Natural killer cell (primary cell): ENCODE measurements at regions of chr9 and their contacts with region 1.

Region 1: DNA sequence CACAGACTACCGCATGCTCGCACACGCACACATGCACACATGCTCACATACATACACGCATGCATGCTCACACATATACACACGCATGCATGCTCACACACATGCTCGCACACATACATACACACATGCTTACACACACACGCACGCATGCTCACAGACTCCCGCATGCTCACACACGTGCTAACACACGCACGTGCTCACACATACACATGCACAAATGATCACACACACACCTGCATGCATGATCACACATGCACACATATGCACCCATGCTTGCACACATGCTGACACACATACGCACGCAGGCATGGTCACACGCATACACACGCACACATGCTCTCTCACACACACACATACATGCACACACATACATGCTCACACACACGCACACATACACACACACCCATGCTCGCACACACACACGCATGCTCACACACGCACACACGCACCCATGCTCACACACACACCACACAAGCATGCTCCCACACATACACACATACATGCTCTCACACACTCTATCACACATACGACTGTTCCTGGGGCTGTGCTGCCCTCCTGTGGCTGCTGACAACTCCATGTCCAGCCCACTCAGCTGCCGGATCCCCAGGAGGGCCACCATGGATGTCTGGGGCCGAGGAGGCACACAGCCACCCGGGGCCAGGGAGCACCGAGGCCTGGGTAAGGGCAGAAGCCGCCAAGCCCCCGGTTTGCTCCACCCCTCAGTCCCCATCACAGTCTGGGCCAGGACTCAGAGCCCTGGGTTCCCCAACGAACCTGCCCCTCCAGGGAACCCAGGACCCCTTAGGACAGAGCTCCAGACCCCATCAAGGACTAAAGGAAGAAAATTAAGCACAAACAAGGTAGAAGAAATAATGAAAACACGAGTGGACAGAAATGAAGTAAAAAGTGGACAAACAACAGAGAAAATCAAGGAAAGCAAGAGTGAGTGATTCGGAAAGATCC is 31.4 kb upstream of the EGFL7 start:
- DNase-seq: peak; percentile 66 to 91
- ATAC-seq: peak; percentile 79 to 91 (median 89)
- H3K4me3 ChIP-seq: no peak overlapping the region
- H3K4me3 Mint-ChIP-seq: no peak overlapping the region
- H3K27ac ChIP-seq: peak overlapping the region; percentile 31
- H3K27ac Mint-ChIP-seq: no peak overlapping the region
- H3K4me1 ChIP-seq: peaks cover 58% of the 10 kb centered on the region
- H3K4me1 Mint-ChIP-seq: peaks cover 0 to 7% of the 10 kb centered on the region in 2 donors
- H3K27me3 ChIP-seq: no peaks in the 10 kb centered on the region
- H3K27me3 Mint-ChIP-seq: peaks cover 0 to 5% of the 10 kb centered on the region in 2 donors
- CTCF ChIP-seq: peak; percentile 57

Region 2: GRCh38 chr9:136245219-136246150 is 385.8 kb before region 1 on chr9 and contains the start of gene QSOX2:
- intact Hi-C with region 1: no loop called
- DNase-seq: peak; percentile 81 to 92
- ATAC-seq: peak; percentile 85 to 93 (median 88)
- H3K4me3 ChIP-seq: peak within 1 kb of the TSS; percentile 38
- H3K4me3 Mint-ChIP-seq: peak within 1 kb of the TSS; percentile 97
- H3K27ac ChIP-seq: peak within 1 kb of the TSS; percentile 59
- H3K27ac Mint-ChIP-seq: peak within 1 kb of the TSS; percentile 85
- H3K4me1 ChIP-seq: peaks cover 50% of the 10 kb centered on the region
- H3K4me1 Mint-ChIP-seq: peaks cover 30 to 38% of the 10 kb centered on the region in 2 donors
- H3K27me3 ChIP-seq: no peaks in the 10 kb centered on the region
- H3K27me3 Mint-ChIP-seq: no peaks in the 10 kb centered on the region
- CTCF ChIP-seq: no peak
- total RNA-seq, gene QSOX2: 10.8 to 16.7 (median 16.6) TPM

Region 3: DNA sequence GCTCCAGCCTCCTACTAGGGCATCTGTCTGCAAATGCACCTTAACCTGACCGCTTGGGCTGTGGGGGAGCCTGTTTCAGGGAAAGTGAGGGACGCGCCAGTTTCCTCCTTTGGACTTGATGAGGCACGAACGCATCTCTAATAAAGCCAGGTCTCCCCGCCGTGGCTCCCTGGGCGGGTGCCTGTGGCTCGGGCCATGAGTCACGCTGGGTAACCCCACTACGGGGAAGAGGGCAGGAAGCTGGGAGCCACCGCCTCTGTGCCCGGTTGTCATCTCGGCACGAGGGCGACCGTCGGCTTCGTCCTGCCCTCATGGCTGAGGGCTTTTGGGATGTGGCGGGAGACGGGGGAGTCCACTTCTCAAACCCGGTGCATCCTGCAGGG is 97.6 kb before region 1 on chr9:
- intact Hi-C with region 1: loop called (anchors 5 kb)
- DNase-seq: peak; percentile 72 to 81
- ATAC-seq: peak; percentile 53 to 70 (median 68)
- H3K4me3 ChIP-seq: peak overlapping the region; percentile 17
- H3K4me3 Mint-ChIP-seq: peak overlapping the region; percentile 90
- H3K27ac ChIP-seq: peak overlapping the region; percentile 78
- H3K27ac Mint-ChIP-seq: peak overlapping the region; percentile 88 to 90
- H3K4me1 ChIP-seq: peaks cover 99% of the 10 kb centered on the region
- H3K4me1 Mint-ChIP-seq: peaks cover 53 to 79% of the 10 kb centered on the region in 2 donors
- H3K27me3 ChIP-seq: no peaks in the 10 kb centered on the region
- H3K27me3 Mint-ChIP-seq: no peaks in the 10 kb centered on the region
- CTCF ChIP-seq: no peak